Mammary epithelial cell (primary cell): ENCODE measurements at regions of chr4 and their contacts with region 1.

Region 1: DNA sequence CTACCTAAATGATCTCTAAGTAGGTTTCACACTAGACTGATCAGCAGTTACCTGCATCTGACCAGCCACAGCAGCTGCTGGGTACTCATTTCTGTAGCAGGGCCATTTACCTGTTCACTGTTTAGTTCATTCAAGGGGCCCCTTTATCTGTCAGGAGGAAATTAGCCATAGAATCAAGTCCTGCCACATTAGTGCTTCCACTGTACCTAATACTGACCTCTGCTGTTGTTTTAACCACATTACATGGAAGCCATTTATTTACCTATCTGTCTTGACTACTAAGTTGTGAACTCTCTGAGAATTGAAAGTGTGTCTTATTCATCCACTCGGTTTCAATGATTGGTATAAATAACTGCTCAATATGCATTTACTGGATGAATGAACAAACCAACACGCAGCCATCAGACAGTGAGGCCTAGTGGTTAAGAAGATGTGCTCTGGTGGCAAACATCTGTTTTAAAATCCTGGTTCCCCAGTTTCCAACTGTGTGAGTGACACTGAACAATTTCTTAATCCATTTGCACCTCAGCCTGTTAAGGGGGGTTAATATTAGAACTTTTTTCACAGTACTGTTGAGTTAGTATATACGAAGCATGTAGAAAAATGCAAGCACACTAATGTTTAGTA is 30.0 kb upstream of the ANXA5 start:
- DNase-seq: peak; percentile 62
- H3K4me3 ChIP-seq: no peak overlapping the region
- H3K27ac ChIP-seq: no peak overlapping the region
- H3K4me1 ChIP-seq: peaks cover 15% of the 10 kb centered on the region
- H3K27me3 ChIP-seq: no peaks in the 10 kb centered on the region
- CTCF ChIP-seq: peak; percentile 71 to 74

Region 2: GRCh38 chr4:121675715-121676114 is 51.0 kb before region 1 on chr4:
- CTCF ChIA-PET with region 1: no interaction called
- dilution Hi-C with region 1: no loop called
- in situ Hi-C with region 1: no loop called
- intact Hi-C with region 1: loop called (anchors 10 kb)
- DNase-seq: no peak
- H3K4me3 ChIP-seq: no peak overlapping the region
- H3K27ac ChIP-seq: no peak overlapping the region
- H3K4me1 ChIP-seq: peaks cover 4% of the 10 kb centered on the region
- H3K27me3 ChIP-seq: no peaks in the 10 kb centered on the region
- CTCF ChIP-seq: peak in 1 of 2 donors; percentile 14

Region 3: GRCh38 chr4:121696581-121697461 is 29.9 kb before region 1 on chr4 and contains the start of gene ANXA5:
- CTCF ChIA-PET with region 1: no interaction called
- dilution Hi-C with region 1: no loop called
- in situ Hi-C with region 1: no loop called
- intact Hi-C with region 1: loop called (anchors 1 kb)
- DNase-seq: peak; percentile 86
- H3K4me3 ChIP-seq: peak within 1 kb of the TSS; percentile 81 to 98 (median 93)
- H3K27ac ChIP-seq: peak within 1 kb of the TSS; percentile 96
- H3K4me1 ChIP-seq: peaks cover 35% of the 10 kb centered on the region
- H3K27me3 ChIP-seq: no peaks in the 10 kb centered on the region
- CTCF ChIP-seq: peak; percentile 5 to 44
- total RNA-seq, gene ANXA5: 335 to 396 TPM

Region 4: GRCh38 chr4:121711263-121712000 is 15.3 kb before region 1 on chr4:
- CTCF ChIA-PET with region 1: no interaction called
- dilution Hi-C with region 1: no loop called
- in situ Hi-C with region 1: no loop called
- intact Hi-C with region 1: loop called (anchors 1 kb)
- DNase-seq: peak; percentile 87
- H3K4me3 ChIP-seq: peak overlapping the region; percentile 19 to 48 (median 40)
- H3K27ac ChIP-seq: peak overlapping the region; percentile 84
- H3K4me1 ChIP-seq: peaks cover 25% of the 10 kb centered on the region
- H3K27me3 ChIP-seq: no peaks in the 10 kb centered on the region
- CTCF ChIP-seq: no peak

Region 5: DNA sequence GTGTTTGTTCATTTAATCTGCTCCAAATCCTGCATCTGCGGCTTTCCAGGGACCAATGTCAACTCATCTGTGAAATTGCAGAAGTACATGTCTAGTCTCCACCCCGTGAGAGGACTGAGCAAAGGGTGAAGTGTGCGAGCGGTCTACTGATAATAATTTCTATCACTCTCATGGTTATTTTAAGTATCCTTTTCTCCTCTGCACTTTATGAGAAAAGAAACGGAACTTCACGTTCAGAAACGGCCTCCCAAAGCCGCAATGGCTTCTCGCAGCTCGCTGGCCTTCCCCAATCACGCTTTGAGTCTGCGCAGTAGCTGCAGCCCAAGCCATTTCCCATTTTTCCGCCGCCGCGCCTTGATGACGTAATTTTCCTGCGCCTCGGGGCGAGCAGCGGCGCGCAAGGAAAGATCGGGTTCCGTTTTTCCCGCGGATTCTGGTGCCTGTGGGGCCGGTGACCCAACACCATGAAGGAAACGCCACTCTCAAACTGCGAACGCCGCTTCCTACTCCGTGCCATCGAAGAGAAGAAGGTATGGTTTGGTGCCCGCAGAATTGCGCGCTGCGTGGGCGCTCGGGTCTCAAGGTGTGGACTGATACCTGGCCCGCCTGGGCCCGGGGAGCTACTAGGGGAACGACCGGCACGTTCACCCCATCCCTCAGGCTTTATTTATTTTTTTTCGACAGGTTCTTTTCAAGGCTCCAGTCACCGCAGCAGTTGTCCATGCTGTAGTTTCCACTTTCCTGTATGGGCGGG is 74.4 kb after region 1 on chr4 and contains the start of gene EXOSC9:
- CTCF ChIA-PET with region 1: no interaction called
- dilution Hi-C with region 1: no loop called
- in situ Hi-C with region 1: no loop called
- intact Hi-C with region 1: loop called (anchors 2 kb)
- DNase-seq: peak; percentile 91
- H3K4me3 ChIP-seq: peak within 1 kb of the TSS; percentile 73 to 97 (median 94)
- H3K27ac ChIP-seq: peak within 1 kb of the TSS; percentile 92
- H3K4me1 ChIP-seq: peaks cover 9% of the 10 kb centered on the region
- H3K27me3 ChIP-seq: no peaks in the 10 kb centered on the region
- CTCF ChIP-seq: no peak
- total RNA-seq, gene EXOSC9: 20.3 to 28.7 TPM